Aorta (tissue), 5 donors: ENCODE measurements at regions of chr11 and their contacts with region 1.

Region 1: DNA sequence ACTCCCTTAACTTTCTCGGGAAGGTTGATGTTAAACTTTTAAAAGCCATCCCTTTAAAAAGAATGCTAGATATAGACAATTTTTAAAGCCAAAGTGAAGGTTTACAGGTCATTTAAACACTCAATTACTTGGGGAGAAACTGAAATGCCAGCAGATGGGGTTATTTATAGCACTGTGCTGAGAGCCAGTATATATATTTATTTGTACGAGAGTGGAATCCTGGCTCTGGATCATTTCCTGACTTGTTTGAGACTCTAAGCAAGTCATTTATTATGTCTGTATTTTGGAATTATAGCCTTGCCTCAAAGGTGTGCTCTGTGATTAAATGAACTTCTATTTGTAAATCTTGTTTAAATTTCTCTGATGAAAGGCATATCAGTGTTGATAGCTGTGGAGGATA is 6.8 kb upstream of the ZBED5 start:
- DNase-seq: no peak
- ATAC-seq: no peak
- H3K4me3 ChIP-seq: no peak overlapping the region
- H3K27ac ChIP-seq: peak overlapping the region in 1 of 2 donors; percentile 77
- H3K4me1 ChIP-seq: peaks cover 2 to 5% of the 10 kb centered on the region in 2 donors
- H3K27me3 ChIP-seq: no peaks in the 10 kb centered on the region

Region 2: DNA sequence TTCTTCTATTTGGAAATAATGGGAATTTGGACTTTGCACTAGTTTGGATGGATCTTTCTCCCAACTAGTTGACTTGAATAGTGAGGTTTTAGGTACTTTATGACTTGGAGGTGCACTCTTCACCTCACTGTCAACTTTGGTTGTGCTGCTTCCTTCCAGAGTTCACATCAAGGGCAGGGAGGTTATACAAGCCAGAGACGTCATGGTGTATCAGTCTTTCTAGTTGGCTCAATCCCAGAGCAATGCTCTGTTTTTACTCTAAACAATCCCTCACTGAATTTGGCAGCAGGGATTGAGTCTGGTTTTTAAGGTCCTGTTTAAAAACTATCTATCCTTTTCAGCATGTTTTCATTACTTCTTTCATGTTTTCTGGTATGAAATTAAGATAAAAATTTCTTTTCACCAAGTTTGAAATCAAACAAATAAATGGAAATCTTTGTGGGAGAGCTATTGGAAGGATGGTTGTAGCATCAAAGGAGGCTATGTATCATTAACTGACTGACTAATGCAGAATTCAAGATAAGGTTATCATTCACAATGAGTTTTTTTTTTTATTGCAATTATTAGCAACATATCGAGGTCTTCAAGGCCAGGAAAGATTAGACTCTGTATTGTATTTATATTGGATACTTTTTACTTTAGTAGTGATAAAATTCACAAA is 21.1 kb after region 1 on chr11:
- intact Hi-C with region 1: no loop called
- DNase-seq: no peak
- ATAC-seq: no peak
- H3K4me3 ChIP-seq: no peak overlapping the region
- H3K27ac ChIP-seq: peak overlapping the region in 1 of 2 donors; percentile 12
- H3K4me1 ChIP-seq: no peaks in the 10 kb centered on the region
- H3K27me3 ChIP-seq: no peaks in the 10 kb centered on the region

Region 3: GRCh38 chr11:10899121-10899830 is 34.6 kb after region 1 on chr11:
- intact Hi-C with region 1: loop called in 1 of 2 experiments (anchors 5 kb)
- DNase-seq: peak; percentile 74 to 82
- ATAC-seq: peak; percentile 66
- H3K4me3 ChIP-seq: no peak overlapping the region
- H3K27ac ChIP-seq: peak overlapping the region; percentile 94 to 99
- H3K4me1 ChIP-seq: peaks cover 0 to 3% of the 10 kb centered on the region in 2 donors
- H3K27me3 ChIP-seq: no peaks in the 10 kb centered on the region